Activated CD8-positive, alpha-beta T cell treated with anti-CD3 and anti-CD28 coated beads for 36 hours (primary cell): ENCODE measurements at regions of chr12 and their contacts with region 1.

Region 1: DNA sequence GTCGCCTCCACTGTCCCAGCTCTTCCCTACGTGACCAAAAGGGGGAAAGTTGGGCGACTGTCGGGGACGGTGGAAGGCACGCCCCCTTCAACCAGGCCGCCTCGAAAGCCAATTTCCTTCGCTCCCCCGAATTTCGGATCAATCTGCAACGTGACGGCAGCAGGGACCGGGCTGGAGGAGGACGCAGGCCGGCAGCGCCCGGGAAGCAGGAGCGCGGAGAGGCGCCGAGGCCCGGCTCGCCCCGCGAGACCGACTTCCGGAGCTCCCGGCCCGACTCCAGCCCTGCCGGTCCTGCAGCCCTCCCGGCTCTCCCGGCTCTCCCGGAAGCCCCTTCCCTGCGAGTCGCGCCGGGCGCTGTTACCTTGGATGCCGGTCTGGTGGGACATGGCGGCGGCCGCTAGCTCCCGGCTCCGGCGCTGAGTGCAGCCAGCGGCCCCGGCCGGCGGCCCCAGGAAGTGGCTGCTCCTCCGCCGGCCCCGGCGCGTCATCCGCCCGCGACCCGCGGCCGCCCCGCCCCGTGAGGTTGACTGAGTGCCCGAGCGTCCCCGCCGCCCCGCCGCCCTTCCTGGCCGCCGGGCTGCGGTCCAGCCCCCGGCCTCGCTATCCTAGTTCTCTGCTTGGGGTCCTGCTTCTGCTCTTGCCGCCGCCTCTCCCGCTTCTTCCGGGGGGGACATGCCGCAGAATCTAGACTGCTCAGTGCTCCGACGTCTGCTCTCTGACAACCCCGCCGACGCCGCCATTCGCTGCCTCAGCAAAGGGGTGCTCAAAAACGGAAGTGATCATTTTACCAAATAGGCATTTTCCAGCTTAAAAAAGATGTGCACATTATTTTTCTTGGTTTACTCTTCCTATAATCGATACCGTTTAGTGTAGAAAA is at the start of gene TWF1:
- DNase-seq: peak; percentile 90
- ATAC-seq: peak; percentile 94
- H3K4me3 Mint-ChIP-seq: peak within 1 kb of the TSS; percentile 82
- H3K27ac Mint-ChIP-seq: peak within 1 kb of the TSS; percentile 100
- H3K4me1 Mint-ChIP-seq: peaks cover 34% of the 10 kb centered on the region
- H3K27me3 Mint-ChIP-seq: no peaks in the 10 kb centered on the region
- CTCF ChIP-seq: no peak
- total RNA-seq, gene TWF1: 17.0 to 18.9 TPM

Region 2: GRCh38 chr12:43723134-43723533 is 83.0 kb before region 1 on chr12:
- CTCF ChIA-PET with region 1: no interaction called
- POLR2A ChIA-PET with region 1: no interaction called
- intact Hi-C with region 1: no loop called
- DNase-seq: no peak
- ATAC-seq: no peak
- H3K4me3 Mint-ChIP-seq: no peak overlapping the region
- H3K27ac Mint-ChIP-seq: no peak overlapping the region
- H3K4me1 Mint-ChIP-seq: no peaks in the 10 kb centered on the region
- H3K27me3 Mint-ChIP-seq: no peaks in the 10 kb centered on the region
- CTCF ChIP-seq: no peak

Region 3: GRCh38 chr12:43758728-43759563 is 47.2 kb before region 1 on chr12 and contains the starts of genes IRAK4 and PUS7L:
- CTCF ChIA-PET with region 1: interaction called, 3 read pairs
- POLR2A ChIA-PET with region 1: interaction called, 10 read pairs
- intact Hi-C with region 1: loop called (anchors 5 kb)
- DNase-seq: peak; percentile 98
- ATAC-seq: peak; percentile 97
- H3K4me3 Mint-ChIP-seq: peak within 1 kb of the TSS; percentile 93
- H3K27ac Mint-ChIP-seq: peak within 1 kb of the TSS; percentile 98
- H3K4me1 Mint-ChIP-seq: peaks cover 62% of the 10 kb centered on the region
- H3K27me3 Mint-ChIP-seq: no peaks in the 10 kb centered on the region
- CTCF ChIP-seq: no peak
- total RNA-seq, gene IRAK4: 24.0 TPM
- total RNA-seq, gene PUS7L: 16.7 to 18.7 TPM

Region 4: GRCh38 chr12:43795716-43796288 is 10.3 kb before region 1 on chr12:
- CTCF ChIA-PET with region 1: interaction called, 12 read pairs
- POLR2A ChIA-PET with region 1: interaction called, 7 read pairs
- intact Hi-C with region 1: no loop called
- DNase-seq: no peak
- ATAC-seq: no peak
- H3K4me3 Mint-ChIP-seq: no peak overlapping the region
- H3K27ac Mint-ChIP-seq: peak overlapping the region; percentile 2
- H3K4me1 Mint-ChIP-seq: peaks cover 7% of the 10 kb centered on the region
- H3K27me3 Mint-ChIP-seq: no peaks in the 10 kb centered on the region
- CTCF ChIP-seq: no peak